ENCODE measurements at regions of chr2 and their contacts with region 1.

Region 1: GRCh38 chr2:181573140-181573736 is 83.7 kb downstream of the CERKL start:
- DNase-seq: peak; percentile 53
- H3K4me3 Mint-ChIP-seq: no peak overlapping the region
- H3K27ac Mint-ChIP-seq: no peak overlapping the region
- H3K4me1 Mint-ChIP-seq: no peaks in the 10 kb centered on the region
- H3K27me3 Mint-ChIP-seq: no peaks in the 10 kb centered on the region
- CTCF ChIP-seq: peak; percentile 37

Region 2: GRCh38 chr2:181104512-181105115 is 468.6 kb before region 1 on chr2:
- CTCF ChIA-PET with region 1: interaction called, 5 read pairs
- POLR2A ChIA-PET with region 1: no interaction called
- intact Hi-C with region 1: loop called (anchors 5 kb)
- DNase-seq: peak; percentile 63
- H3K4me3 Mint-ChIP-seq: no peak overlapping the region
- H3K27ac Mint-ChIP-seq: no peak overlapping the region
- H3K4me1 Mint-ChIP-seq: peaks cover 8% of the 10 kb centered on the region
- H3K27me3 Mint-ChIP-seq: no peaks in the 10 kb centered on the region
- CTCF ChIP-seq: peak; percentile 70

Region 3: GRCh38 chr2:181563101-181563692 is 10.0 kb before region 1 on chr2:
- CTCF ChIA-PET with region 1: interaction called, 14 read pairs
- POLR2A ChIA-PET with region 1: interaction called, 3 read pairs
- intact Hi-C with region 1: no loop called
- DNase-seq: no peak
- H3K4me3 Mint-ChIP-seq: no peak overlapping the region
- H3K27ac Mint-ChIP-seq: no peak overlapping the region
- H3K4me1 Mint-ChIP-seq: peaks cover 6% of the 10 kb centered on the region
- H3K27me3 Mint-ChIP-seq: no peaks in the 10 kb centered on the region
- CTCF ChIP-seq: no peak

Region 4: GRCh38 chr2:181723731-181724130 is 150.5 kb after region 1 on chr2:
- CTCF ChIA-PET with region 1: interaction called, 149 read pairs
- POLR2A ChIA-PET with region 1: no interaction called
- intact Hi-C with region 1: no loop called
- DNase-seq: no peak
- H3K4me3 Mint-ChIP-seq: no peak overlapping the region
- H3K27ac Mint-ChIP-seq: no peak overlapping the region
- H3K4me1 Mint-ChIP-seq: no peaks in the 10 kb centered on the region
- H3K27me3 Mint-ChIP-seq: no peaks in the 10 kb centered on the region
- CTCF ChIP-seq: no peak

Region 5: GRCh38 chr2:182077451-182078142 is 504.4 kb after region 1 on chr2:
- CTCF ChIA-PET with region 1: interaction called, 3 read pairs
- POLR2A ChIA-PET with region 1: interaction called, 5 read pairs
- intact Hi-C with region 1: loop called (anchors 2 kb)
- DNase-seq: peak; percentile 85
- H3K4me3 Mint-ChIP-seq: no peak overlapping the region
- H3K27ac Mint-ChIP-seq: no peak overlapping the region
- H3K4me1 Mint-ChIP-seq: no peaks in the 10 kb centered on the region
- H3K27me3 Mint-ChIP-seq: no peaks in the 10 kb centered on the region
- CTCF ChIP-seq: peak; percentile 70

Measured in MCF 10A (cell line).